ENCODE measurements at regions of chr1 and their contacts with region 1.

Region 1: DNA sequence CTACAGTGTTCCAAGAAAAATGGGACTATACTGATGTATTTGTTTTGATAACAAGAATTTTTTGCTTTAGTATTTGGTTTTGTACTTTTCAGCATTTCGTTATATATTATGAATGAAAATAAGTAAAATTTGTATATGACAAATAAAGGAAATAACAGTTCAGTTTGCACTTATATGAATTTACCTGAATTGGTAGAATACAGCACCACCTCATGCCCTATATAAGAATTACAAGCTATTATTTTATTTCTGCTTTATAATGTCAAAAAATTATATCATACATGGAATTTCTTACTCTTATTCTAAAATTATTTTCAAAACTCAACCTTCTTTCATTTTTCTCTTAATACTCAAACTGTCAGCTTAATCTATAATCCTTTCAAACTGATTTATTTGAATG is 14.6 kb downstream of the EFCAB7 start:
- DNase-seq: no peak
- H3K4me3 ChIP-seq: no peak overlapping the region
- H3K27ac ChIP-seq: no peak overlapping the region
- H3K4me1 ChIP-seq: no peaks in the 10 kb centered on the region
- H3K27me3 ChIP-seq: no peaks in the 10 kb centered on the region
- CTCF ChIP-seq: peak; percentile 43 to 49

Region 2: GRCh38 chr1:62962901-62963776 is 574.8 kb before region 1 on chr1:
- CTCF ChIA-PET with region 1: no interaction called
- dilution Hi-C with region 1: no loop called
- in situ Hi-C with region 1: no loop called
- intact Hi-C with region 1: loop called (anchors 2 kb)
- DNase-seq: peak; percentile 8
- H3K4me3 ChIP-seq: no peak overlapping the region
- H3K27ac ChIP-seq: no peak overlapping the region
- H3K4me1 ChIP-seq: no peaks in the 10 kb centered on the region
- H3K27me3 ChIP-seq: no peaks in the 10 kb centered on the region
- CTCF ChIP-seq: peak; percentile 35 to 61

Region 3: DNA sequence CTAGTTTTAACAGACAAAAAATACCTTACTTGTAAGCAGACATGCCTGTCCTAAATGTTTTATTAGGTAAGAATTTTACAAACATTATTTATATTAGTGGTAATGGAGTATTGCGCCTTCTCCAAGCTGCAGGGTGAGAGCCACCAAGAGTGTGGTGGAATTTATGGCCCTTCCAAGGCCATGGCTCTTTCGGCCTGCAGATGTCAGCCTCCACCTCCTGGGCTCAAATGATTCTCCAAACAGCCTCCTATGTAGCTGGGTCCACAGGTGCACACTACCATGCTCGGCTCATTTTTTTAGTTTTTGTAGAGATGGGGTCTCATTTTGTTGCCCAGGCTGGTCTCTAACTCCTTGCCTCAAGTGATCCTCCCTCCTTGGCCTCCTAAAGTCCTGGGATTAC is 71.2 kb before region 1 on chr1:
- CTCF ChIA-PET with region 1: interaction called, 6 read pairs
- dilution Hi-C with region 1: no loop called
- in situ Hi-C with region 1: no loop called
- intact Hi-C with region 1: loop called (anchors 2 kb)
- DNase-seq: no peak
- H3K4me3 ChIP-seq: no peak overlapping the region
- H3K27ac ChIP-seq: no peak overlapping the region
- H3K4me1 ChIP-seq: no peaks in the 10 kb centered on the region
- H3K27me3 ChIP-seq: no peaks in the 10 kb centered on the region
- CTCF ChIP-seq: peak in 1 of 2 donors; percentile 35

Region 4: DNA sequence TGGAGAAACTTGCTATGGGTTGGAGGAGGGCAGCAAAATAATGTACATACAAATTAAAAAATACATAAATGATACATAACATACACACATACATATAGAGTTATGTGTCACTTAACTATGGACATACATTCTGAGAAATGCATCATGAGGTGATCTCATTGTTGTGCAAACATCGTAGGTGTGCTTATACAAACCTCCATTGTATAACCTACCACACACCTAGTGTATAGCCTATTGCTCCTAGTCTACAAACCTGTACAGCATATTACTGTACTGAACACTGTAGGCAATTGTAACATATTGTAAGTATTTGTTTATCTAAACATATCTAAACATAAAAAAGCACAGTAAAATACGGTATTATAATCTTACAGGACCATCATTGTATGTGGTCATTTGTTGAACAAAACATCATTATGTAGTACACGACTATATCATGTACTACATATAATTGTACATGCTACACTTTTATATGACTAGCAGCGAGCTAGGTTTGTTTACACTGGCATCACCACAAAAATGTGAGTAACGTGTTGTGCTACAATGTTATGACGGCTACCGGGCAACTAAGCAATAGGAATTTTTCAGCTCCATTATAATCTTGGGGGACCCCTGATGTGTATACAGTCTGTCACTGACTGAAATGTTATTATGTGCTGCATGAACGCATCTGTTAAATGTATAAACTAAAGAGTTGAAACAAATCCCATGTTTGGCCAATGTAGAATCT is 50.4 kb before region 1 on chr1:
- CTCF ChIA-PET with region 1: no interaction called
- dilution Hi-C with region 1: no loop called
- in situ Hi-C with region 1: no loop called
- intact Hi-C with region 1: no loop called
- DNase-seq: no peak
- H3K4me3 ChIP-seq: no peak overlapping the region
- H3K27ac ChIP-seq: no peak overlapping the region
- H3K4me1 ChIP-seq: no peaks in the 10 kb centered on the region
- H3K27me3 ChIP-seq: no peaks in the 10 kb centered on the region
- CTCF ChIP-seq: no peak

Region 5: DNA sequence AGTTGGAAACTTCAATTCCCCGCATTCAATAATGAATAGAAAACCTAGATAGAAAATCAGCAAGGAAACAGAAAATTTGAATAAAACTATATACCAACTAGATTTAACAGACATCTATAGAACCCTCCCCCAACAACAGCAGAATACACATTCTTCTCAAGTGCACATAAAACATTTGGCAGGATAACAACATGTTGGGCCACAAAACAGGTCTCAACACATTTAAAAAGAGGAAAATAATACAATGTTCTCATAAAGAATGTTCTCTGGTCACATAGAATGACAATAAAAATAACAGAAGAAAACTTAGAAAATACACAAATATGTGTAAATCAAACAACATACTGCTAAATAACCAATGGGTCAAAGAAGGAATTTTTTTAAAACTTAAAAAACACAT is 39.8 kb before region 1 on chr1:
- CTCF ChIA-PET with region 1: no interaction called
- dilution Hi-C with region 1: no loop called
- in situ Hi-C with region 1: no loop called
- intact Hi-C with region 1: no loop called
- DNase-seq: peak; percentile 51
- H3K4me3 ChIP-seq: no peak overlapping the region
- H3K27ac ChIP-seq: no peak overlapping the region
- H3K4me1 ChIP-seq: peaks cover 3% of the 10 kb centered on the region
- H3K27me3 ChIP-seq: no peaks in the 10 kb centered on the region
- CTCF ChIP-seq: no peak